CD4-positive, alpha-beta T cell (primary cell): ENCODE measurements at regions of chr4 and their contacts with region 1.

Region 1: GRCh38 chr4:101169044-101170014 is 178.0 kb downstream of the PPP3CA start:
- DNase-seq: peak in 13 of 14 experiments; percentile 6 to 78 (median 31)
- ATAC-seq: peak; percentile 84
- H3K4me3 ChIP-seq: no peak overlapping the region
- H3K4me3 Mint-ChIP-seq: no peak overlapping the region
- H3K27ac ChIP-seq: no peak overlapping the region
- H3K27ac Mint-ChIP-seq: no peak overlapping the region
- H3K4me1 ChIP-seq: peaks cover 3% of the 10 kb centered on the region
- H3K4me1 Mint-ChIP-seq: no peaks in the 10 kb centered on the region
- H3K27me3 ChIP-seq: no peaks in the 10 kb centered on the region
- H3K27me3 Mint-ChIP-seq: no peaks in the 10 kb centered on the region
- CTCF ChIP-seq: peak; percentile 63

Region 2: GRCh38 chr4:99832336-99832735 is 1337.0 kb before region 1 on chr4:
- CTCF ChIA-PET with region 1: no interaction called
- POLR2A ChIA-PET with region 1: no interaction called
- intact Hi-C with region 1: no loop called
- DNase-seq: no peak
- ATAC-seq: no peak
- H3K4me3 ChIP-seq: no peak overlapping the region
- H3K4me3 Mint-ChIP-seq: no peak overlapping the region
- H3K27ac ChIP-seq: no peak overlapping the region
- H3K27ac Mint-ChIP-seq: no peak overlapping the region
- H3K4me1 ChIP-seq: no peaks in the 10 kb centered on the region
- H3K4me1 Mint-ChIP-seq: peaks cover 11% of the 10 kb centered on the region
- H3K27me3 ChIP-seq: no peaks in the 10 kb centered on the region
- H3K27me3 Mint-ChIP-seq: no peaks in the 10 kb centered on the region
- CTCF ChIP-seq: no peak

Region 3: DNA sequence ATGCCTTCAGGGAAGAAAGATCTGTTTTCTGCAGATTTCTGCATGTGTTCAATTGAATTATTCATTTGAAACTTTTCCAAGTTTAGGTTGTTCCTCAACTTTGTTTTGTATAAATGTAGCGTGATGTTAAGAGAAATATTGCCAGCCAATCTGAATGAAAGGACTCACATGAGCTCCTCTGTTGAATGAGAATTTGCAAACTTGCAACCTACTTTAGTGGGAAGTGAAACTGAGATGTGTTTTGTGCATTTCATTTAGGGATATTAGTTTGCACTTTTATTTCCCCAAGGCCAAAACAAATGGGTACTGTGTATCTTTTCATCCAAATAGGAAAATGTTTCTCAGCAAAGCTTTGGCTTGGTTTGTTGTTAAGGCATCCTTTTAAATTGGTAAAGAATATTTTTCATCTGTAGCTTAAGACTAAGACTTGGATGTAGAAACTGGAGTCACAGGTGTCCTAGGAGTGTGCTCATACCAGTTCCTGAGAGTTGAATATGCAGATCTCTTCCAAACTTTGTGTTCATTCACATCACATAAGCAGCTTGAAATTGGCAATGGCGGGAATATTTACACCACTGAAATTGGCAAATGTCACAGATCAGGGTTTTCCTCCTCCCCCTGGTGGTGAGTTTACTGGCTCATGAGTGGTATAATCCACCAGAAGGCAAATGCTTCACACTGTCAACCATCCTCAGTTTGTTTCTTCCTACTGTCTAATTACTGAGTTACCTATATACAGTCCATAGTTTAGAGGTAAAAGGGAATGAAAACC is 427.6 kb after region 1 on chr4:
- CTCF ChIA-PET with region 1: no interaction called
- POLR2A ChIA-PET with region 1: no interaction called
- intact Hi-C with region 1: loop called (anchors 1 to 5 kb)
- DNase-seq: peak in 8 of 14 experiments; percentile 1 to 62 (median 27)
- ATAC-seq: peak; percentile 32
- H3K4me3 ChIP-seq: no peak overlapping the region
- H3K4me3 Mint-ChIP-seq: no peak overlapping the region
- H3K27ac ChIP-seq: no peak overlapping the region
- H3K27ac Mint-ChIP-seq: no peak overlapping the region
- H3K4me1 ChIP-seq: no peaks in the 10 kb centered on the region
- H3K4me1 Mint-ChIP-seq: no peaks in the 10 kb centered on the region
- H3K27me3 ChIP-seq: no peaks in the 10 kb centered on the region
- H3K27me3 Mint-ChIP-seq: no peaks in the 10 kb centered on the region
- CTCF ChIP-seq: peak; percentile 46

Region 4: DNA sequence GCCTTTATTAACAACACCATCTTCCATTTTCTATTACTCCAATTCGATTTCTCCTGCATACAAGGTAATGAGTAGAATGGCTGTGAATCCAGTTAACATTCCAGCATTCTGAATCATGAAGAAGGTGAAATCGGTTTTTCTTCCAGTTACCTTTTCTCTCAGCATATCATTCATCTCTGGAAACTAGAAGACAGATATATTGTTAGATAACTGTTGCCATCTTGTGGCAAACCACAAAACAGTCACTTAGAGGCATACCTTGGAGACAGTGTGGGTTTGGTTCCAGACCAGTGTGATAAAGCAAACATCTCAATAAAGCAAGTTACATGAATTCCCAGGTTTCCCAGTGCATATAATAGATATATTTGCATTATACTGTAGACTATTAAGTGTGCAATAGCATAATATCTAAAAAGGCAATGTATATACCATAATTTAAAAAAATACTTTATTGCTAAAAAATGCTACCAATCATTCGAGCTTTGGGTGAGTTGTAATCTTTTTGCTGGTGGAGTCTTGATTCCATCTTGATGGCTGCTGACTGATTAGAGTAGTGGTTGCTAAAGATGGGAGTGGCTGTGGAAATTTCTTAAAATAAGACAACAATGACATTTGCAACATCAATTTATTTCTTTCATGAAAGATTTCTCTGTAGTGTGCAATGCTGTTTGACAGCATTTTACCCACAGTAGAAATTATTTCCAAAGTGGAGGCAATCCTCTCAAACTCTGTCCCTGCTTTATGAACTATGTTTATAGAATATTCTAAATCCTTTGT is 1093.9 kb after region 1 on chr4:
- CTCF ChIA-PET with region 1: no interaction called
- POLR2A ChIA-PET with region 1: no interaction called
- intact Hi-C with region 1: loop called (anchors 1 to 5 kb)
- DNase-seq: peak in 3 of 14 experiments; percentile 36 to 41 (median 40)
- ATAC-seq: peak; percentile 70
- H3K4me3 ChIP-seq: no peak overlapping the region
- H3K4me3 Mint-ChIP-seq: no peak overlapping the region
- H3K27ac ChIP-seq: no peak overlapping the region
- H3K27ac Mint-ChIP-seq: no peak overlapping the region
- H3K4me1 ChIP-seq: no peaks in the 10 kb centered on the region
- H3K4me1 Mint-ChIP-seq: peaks cover 4% of the 10 kb centered on the region
- H3K27me3 ChIP-seq: no peaks in the 10 kb centered on the region
- H3K27me3 Mint-ChIP-seq: no peaks in the 10 kb centered on the region
- CTCF ChIP-seq: peak; percentile 32